HepG2 (cell line): ENCODE measurements at regions of chr6 and their contacts with region 1.

Region 1: GRCh38 chr6:61538765-61539164 is 747.3 kb downstream of the KHDRBS2 start:
- DNase-seq: no peak
- ATAC-seq: no peak
- H3K4me3 ChIP-seq: no peak overlapping the region
- H3K27ac ChIP-seq: no peak overlapping the region
- H3K4me1 ChIP-seq: no peaks in the 10 kb centered on the region
- H3K27me3 ChIP-seq: no peaks in the 10 kb centered on the region; a peak in 1 of 5 replicates
- CTCF ChIP-seq: no peak
- EP300 ChIP-seq: no peak
- POLR2A ChIP-seq: no peak
- RAD21 ChIP-seq: no peak

Region 2: DNA sequence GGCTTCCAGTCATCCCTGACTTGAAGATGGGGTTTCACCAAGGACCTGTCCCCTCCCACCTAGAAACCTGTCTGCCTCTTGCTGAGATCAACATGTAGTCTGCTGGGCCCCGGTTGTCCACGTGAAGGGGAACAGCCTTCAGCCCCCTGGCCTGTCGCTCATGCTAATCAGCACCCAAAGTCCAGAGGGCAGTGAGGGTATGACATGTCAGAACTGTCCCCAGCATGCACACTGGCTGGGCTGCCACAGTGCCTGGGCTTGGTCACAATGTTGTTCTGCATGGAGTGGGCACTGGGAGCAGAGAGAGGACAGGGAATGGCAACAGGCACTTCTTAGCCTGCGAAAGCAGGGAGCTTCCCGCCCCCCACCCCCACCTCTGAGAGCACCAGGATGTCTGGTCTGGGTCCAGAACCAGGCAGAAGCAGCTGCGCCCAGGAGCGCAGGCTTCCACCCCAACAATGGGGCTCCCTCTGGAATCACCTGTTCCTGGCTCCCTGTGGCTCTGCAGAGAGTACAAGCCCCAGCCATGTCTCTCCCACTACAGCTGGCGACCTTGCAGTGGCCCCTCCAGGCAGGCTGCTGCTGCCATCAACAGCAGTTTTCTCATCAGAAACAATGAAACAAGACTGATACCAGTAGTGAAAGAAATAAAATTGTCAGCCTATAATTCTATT is 564.6 kb after region 1 on chr6:
- CTCF ChIA-PET with region 1: no interaction called
- POLR2A ChIA-PET with region 1: no interaction called
- in situ Hi-C with region 1: no loop called
- intact Hi-C with region 1: no loop called
- DNase-seq: no peak
- ATAC-seq: peak; percentile 81
- H3K4me3 ChIP-seq: no peak overlapping the region
- H3K27ac ChIP-seq: no peak overlapping the region
- H3K4me1 ChIP-seq: no peaks in the 10 kb centered on the region
- H3K27me3 ChIP-seq: no peaks in the 10 kb centered on the region
- CTCF ChIP-seq: no peak
- EP300 ChIP-seq: no peak
- POLR2A ChIP-seq: no peak
- RAD21 ChIP-seq: no peak

Region 3: GRCh38 chr6:62371453-62372210 is 832.9 kb after region 1 on chr6:
- CTCF ChIA-PET with region 1: no interaction called
- POLR2A ChIA-PET with region 1: no interaction called
- in situ Hi-C with region 1: no loop called
- intact Hi-C with region 1: loop called (anchors 5 kb)
- DNase-seq: no peak
- ATAC-seq: no peak
- H3K4me3 ChIP-seq: no peak overlapping the region
- H3K27ac ChIP-seq: no peak overlapping the region
- H3K4me1 ChIP-seq: no peaks in the 10 kb centered on the region
- H3K27me3 ChIP-seq: no peaks in the 10 kb centered on the region
- CTCF ChIP-seq: no peak
- EP300 ChIP-seq: no peak
- POLR2A ChIP-seq: no peak
- RAD21 ChIP-seq: no peak